ENCODE measurements at regions of chr19 and their contacts with region 1.

Region 1: DNA sequence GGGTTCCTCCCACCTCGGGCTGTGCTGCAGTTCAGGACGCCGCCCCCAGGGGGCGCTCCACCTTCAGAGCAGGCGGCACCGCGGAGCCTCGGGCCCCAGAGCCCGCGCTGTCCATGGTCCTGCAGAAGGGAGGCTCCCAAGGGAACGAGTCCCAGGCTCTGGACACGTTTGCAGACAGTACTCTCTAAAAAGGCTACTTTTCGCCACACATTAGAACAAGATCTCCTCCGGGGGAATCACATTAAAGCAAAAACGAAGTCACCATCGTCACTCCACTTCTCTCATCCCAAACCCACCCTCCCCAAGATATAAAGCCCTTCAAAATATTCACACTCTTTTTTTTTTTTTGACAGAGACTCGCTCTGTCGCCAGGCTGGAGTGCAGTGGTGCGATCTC is 4.6 kb upstream of the SIGLEC10 start:
- DNase-seq: peak; percentile 87
- ATAC-seq: peak; percentile 39
- H3K4me3 ChIP-seq: no peak overlapping the region
- H3K4me3 Mint-ChIP-seq: peak overlapping the region; percentile 39
- H3K27ac ChIP-seq: no peak overlapping the region
- H3K27ac Mint-ChIP-seq: no peak overlapping the region
- H3K4me1 ChIP-seq: peaks cover 19 to 33% of the 10 kb centered on the region in 2 donors
- H3K4me1 Mint-ChIP-seq: peaks cover 29% of the 10 kb centered on the region
- H3K27me3 ChIP-seq: peaks cover 0 to 15% (median 3%) of the 10 kb centered on the region in 4 experiments
- H3K27me3 Mint-ChIP-seq: peaks cover 10% of the 10 kb centered on the region
- CTCF ChIP-seq: peak; percentile 99

Region 2: DNA sequence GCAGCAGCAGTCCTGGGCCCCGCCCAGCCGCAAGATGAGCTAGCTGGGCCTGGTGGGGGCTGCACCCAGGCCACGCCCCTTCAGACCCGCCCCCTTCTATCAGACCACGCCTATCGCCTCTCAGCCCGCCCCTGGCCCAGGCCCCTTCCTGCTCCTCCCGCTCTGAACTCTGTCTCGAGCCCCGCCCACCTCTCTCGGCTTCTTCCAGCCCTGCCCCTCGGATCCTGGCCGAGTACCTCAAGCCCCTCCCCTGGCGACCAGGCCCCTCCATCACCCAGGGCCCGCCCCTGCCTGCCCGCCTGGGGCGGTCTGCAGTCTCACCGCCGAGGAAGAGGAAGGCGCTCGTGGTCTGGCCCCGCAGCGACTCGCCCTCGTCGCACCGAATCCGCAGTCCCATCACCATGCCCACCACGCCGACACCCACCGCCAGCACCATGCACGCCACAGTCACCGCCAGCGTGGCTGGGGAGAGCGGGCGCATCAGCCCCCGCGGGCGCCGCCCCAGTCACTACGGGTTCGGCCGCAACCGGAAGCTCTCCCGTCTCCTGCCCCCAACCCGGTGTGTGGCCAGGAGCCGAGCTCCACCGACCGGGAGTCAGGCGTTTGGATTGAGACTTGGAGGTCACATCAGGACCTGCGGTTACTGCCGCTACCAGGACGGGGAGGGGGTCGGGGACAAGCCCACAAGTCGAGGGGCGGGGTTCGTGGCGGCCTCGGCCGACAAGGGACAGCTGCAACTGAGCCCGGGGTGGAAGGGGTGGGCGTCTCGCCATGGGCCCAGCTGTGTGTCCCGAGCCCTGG is 54.3 kb before region 1 on chr19:
- CTCF ChIA-PET with region 1: interaction called, 9 read pairs
- POLR2A ChIA-PET with region 1: interaction called, 12 read pairs
- intact Hi-C with region 1: loop called (anchors 1 kb)
- DNase-seq: peak; percentile 98
- ATAC-seq: peak; percentile 85
- H3K4me3 ChIP-seq: peak overlapping the region; percentile 73 to 94 (median 78)
- H3K4me3 Mint-ChIP-seq: peak overlapping the region; percentile 97
- H3K27ac ChIP-seq: peak overlapping the region; percentile 80 to 87
- H3K27ac Mint-ChIP-seq: peak overlapping the region; percentile 95
- H3K4me1 ChIP-seq: peaks cover 5 to 36% of the 10 kb centered on the region in 2 donors
- H3K4me1 Mint-ChIP-seq: peaks cover 37% of the 10 kb centered on the region
- H3K27me3 ChIP-seq: no peaks in the 10 kb centered on the region
- H3K27me3 Mint-ChIP-seq: no peaks in the 10 kb centered on the region
- CTCF ChIP-seq: no peak

Region 3: DNA sequence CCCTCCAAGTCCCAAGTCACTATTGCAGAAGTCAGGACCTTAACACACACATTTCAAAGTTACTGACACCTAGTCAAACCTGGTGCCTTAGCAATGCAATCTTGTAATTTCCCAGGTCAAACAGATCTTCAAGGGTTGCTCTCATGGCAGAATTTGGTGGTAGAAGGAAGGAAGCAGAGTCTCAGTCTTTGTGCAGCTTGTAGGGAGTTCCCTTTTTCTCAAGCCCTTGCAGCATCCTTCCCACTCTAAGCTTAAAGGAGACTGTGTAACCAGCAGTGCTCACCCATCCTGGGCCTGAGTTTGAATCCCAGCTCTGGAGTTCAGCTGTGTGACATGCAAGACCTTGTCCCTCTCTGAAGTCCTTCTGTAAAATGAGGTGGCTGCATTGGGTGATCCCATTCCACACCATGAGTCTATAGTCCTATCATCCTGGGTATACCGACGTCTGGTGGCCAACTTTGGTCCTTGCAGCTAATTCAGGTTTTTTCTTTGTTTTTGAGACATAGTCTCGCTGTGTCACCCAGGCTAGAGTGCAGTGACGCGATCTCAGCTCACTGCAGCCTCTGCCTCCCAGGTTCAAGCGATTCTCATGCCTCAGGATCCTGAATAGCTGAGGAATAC is 14.4 kb before region 1 on chr19:
- CTCF ChIA-PET with region 1: interaction called, 27 read pairs
- POLR2A ChIA-PET with region 1: interaction called, 14 read pairs
- intact Hi-C with region 1: no loop called
- DNase-seq: peak; percentile 60
- ATAC-seq: peak; percentile 76
- H3K4me3 ChIP-seq: no peak overlapping the region
- H3K4me3 Mint-ChIP-seq: no peak overlapping the region
- H3K27ac ChIP-seq: peak overlapping the region in 1 of 2 donors; percentile 48
- H3K27ac Mint-ChIP-seq: no peak overlapping the region
- H3K4me1 ChIP-seq: peaks cover 22 to 30% of the 10 kb centered on the region in 2 donors
- H3K4me1 Mint-ChIP-seq: peaks cover 20% of the 10 kb centered on the region
- H3K27me3 ChIP-seq: no peaks in the 10 kb centered on the region
- H3K27me3 Mint-ChIP-seq: no peaks in the 10 kb centered on the region
- CTCF ChIP-seq: peak; percentile 63

Region 4: GRCh38 chr19:51514866-51515481 is 92.9 kb after region 1 on chr19:
- CTCF ChIA-PET with region 1: interaction called, 14 read pairs
- POLR2A ChIA-PET with region 1: no interaction called
- intact Hi-C with region 1: loop called (anchors 10 kb)
- DNase-seq: peak; percentile 74
- ATAC-seq: peak; percentile 56
- H3K4me3 ChIP-seq: no peak overlapping the region
- H3K4me3 Mint-ChIP-seq: no peak overlapping the region
- H3K27ac ChIP-seq: no peak overlapping the region
- H3K27ac Mint-ChIP-seq: no peak overlapping the region
- H3K4me1 ChIP-seq: peaks cover 6 to 7% of the 10 kb centered on the region in 2 donors
- H3K4me1 Mint-ChIP-seq: peaks cover 7% of the 10 kb centered on the region
- H3K27me3 ChIP-seq: peaks cover 0 to 4% (median 0%) of the 10 kb centered on the region in 4 experiments
- H3K27me3 Mint-ChIP-seq: peaks cover 5% of the 10 kb centered on the region
- CTCF ChIP-seq: peak; percentile 89

Region 5: GRCh38 chr19:51552996-51553725 is 131.1 kb after region 1 on chr19:
- CTCF ChIA-PET with region 1: interaction called, 3 read pairs
- POLR2A ChIA-PET with region 1: interaction called, 3 read pairs
- intact Hi-C with region 1: loop called (anchors 10 kb)
- DNase-seq: peak; percentile 74
- ATAC-seq: no peak
- H3K4me3 ChIP-seq: peak overlapping the region in 4 of 5 experiments; percentile 55 to 87 (median 74)
- H3K4me3 Mint-ChIP-seq: peak overlapping the region; percentile 95
- H3K27ac ChIP-seq: no peak overlapping the region
- H3K27ac Mint-ChIP-seq: no peak overlapping the region
- H3K4me1 ChIP-seq: peaks cover 43 to 61% of the 10 kb centered on the region in 2 donors
- H3K4me1 Mint-ChIP-seq: peaks cover 78% of the 10 kb centered on the region
- H3K27me3 ChIP-seq: no peaks in the 10 kb centered on the region
- H3K27me3 Mint-ChIP-seq: no peaks in the 10 kb centered on the region
- CTCF ChIP-seq: no peak

Region 6: GRCh38 chr19:51621178-51621577 is 199.1 kb after region 1 on chr19:
- CTCF ChIA-PET with region 1: no interaction called
- POLR2A ChIA-PET with region 1: no interaction called
- intact Hi-C with region 1: no loop called
- DNase-seq: peak; percentile 66
- ATAC-seq: peak; percentile 73
- H3K4me3 ChIP-seq: no peak overlapping the region
- H3K4me3 Mint-ChIP-seq: no peak overlapping the region
- H3K27ac ChIP-seq: peak overlapping the region in 1 of 2 donors; percentile 56
- H3K27ac Mint-ChIP-seq: peak overlapping the region; percentile 59
- H3K4me1 ChIP-seq: peaks cover 12 to 22% of the 10 kb centered on the region in 2 donors
- H3K4me1 Mint-ChIP-seq: peaks cover 23% of the 10 kb centered on the region
- H3K27me3 ChIP-seq: no peaks in the 10 kb centered on the region
- H3K27me3 Mint-ChIP-seq: no peaks in the 10 kb centered on the region
- CTCF ChIP-seq: no peak

Region 7: DNA sequence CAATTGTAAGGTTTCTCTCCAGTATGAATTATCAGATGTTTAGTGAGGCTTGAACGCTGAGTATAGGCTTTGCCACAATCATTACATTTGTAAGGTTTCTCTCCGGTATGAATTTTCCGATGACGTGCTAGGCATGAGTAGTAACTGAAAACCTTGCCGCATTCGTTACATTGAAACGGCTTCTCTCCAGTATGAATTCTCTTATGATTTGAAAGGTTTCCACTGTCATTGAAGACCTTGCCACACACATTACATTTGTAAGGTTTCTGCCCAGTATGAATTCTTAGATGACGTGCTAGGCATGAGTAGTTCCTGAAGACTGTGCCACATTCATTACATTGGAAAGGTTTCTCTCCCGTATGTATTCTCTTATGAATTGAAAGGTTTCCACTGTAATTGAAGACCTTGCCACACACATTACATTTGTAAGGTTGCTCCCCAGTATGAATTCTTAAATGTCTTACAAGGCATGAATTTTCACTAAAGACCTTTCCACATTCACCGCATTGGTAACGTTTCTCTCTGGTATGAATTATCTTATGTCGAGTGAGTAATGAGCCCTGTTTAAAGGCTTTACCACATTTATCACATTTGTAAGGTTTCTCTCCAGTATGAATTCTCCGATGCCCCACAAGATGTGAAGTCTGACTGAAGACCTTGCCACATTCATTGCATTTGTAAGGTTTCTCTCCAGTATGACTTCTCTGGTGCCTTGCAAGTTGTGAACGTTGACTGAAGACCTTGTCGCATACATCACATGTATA is 733.7 kb after region 1 on chr19:
- CTCF ChIA-PET with region 1: no interaction called
- POLR2A ChIA-PET with region 1: no interaction called
- intact Hi-C with region 1: no loop called
- DNase-seq: no peak
- ATAC-seq: no peak
- H3K4me3 ChIP-seq: peak overlapping the region in 1 of 5 experiments; percentile 26
- H3K4me3 Mint-ChIP-seq: no peak overlapping the region
- H3K27ac ChIP-seq: no peak overlapping the region
- H3K27ac Mint-ChIP-seq: no peak overlapping the region
- H3K4me1 ChIP-seq: no peaks in the 10 kb centered on the region
- H3K4me1 Mint-ChIP-seq: no peaks in the 10 kb centered on the region
- H3K27me3 ChIP-seq: no peaks in the 10 kb centered on the region
- H3K27me3 Mint-ChIP-seq: no peaks in the 10 kb centered on the region
- CTCF ChIP-seq: no peak

Measured in B cell (primary cell).